ENCODE measurements at regions of chr18 and their contacts with region 1.

Region 1: DNA sequence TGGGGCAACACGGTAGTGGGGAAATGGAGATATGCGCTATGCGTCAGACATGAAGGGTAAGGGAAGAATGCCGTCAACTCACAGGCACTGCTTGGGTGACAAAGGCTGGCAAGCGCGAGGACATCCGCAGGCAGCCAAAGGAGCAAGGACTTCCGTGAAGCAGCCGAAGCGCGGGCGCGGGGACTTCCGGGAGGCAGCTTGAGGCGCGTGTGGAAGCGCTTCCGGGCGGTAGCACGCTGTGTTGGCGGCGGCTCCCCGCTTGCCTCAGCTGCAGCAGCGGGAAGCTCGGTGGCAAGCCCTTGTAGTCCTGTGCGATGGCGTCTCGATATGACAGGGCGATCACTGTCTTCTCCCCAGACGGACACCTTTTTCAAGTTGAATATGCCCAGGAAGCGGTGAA is at the start of gene PSMA8:
- DNase-seq: no peak
- H3K4me3 ChIP-seq: no peak within 1 kb of the TSS
- CTCF ChIP-seq: no peak
- POLR2A ChIP-seq: no peak
- total RNA-seq, gene PSMA8: not detected

Region 2: GRCh38 chr18:27062802-27063201 is 929.1 kb after region 1 on chr18:
- intact Hi-C with region 1: loop called (anchors 5 kb)
- DNase-seq: no peak
- H3K4me3 ChIP-seq: no peak overlapping the region
- CTCF ChIP-seq: no peak
- POLR2A ChIP-seq: no peak